ENCODE measurements at regions of chr14 and their contacts with region 1.

Region 1: GRCh38 chr14:35341446-35342159 is 49.4 kb downstream of the PSMA6 start:
- DNase-seq: peak; percentile 97
- H3K4me3 ChIP-seq: peak overlapping the region in 1 of 4 donors; percentile 28
- H3K27ac ChIP-seq: peak overlapping the region; percentile 91 to 95 (median 92)
- H3K4me1 ChIP-seq: peaks cover 50 to 78% (median 62%) of the 10 kb centered on the region in 4 donors
- H3K27me3 ChIP-seq: no peaks in the 10 kb centered on the region
- CTCF ChIP-seq: no peak
- EP300 ChIP-seq: peak; percentile 35
- POLR2A ChIP-seq: peak; percentile 89

Region 2: GRCh38 chr14:35292051-35292769 is 49.4 kb before region 1 on chr14 and contains the start of gene PSMA6:
- in situ Hi-C with region 1: no loop called
- intact Hi-C with region 1: loop called (anchors 5 kb)
- DNase-seq: peak; percentile 100
- H3K4me3 ChIP-seq: peak within 1 kb of the TSS; percentile 58 to 68 (median 64)
- H3K27ac ChIP-seq: peak within 1 kb of the TSS; percentile 89 to 91 (median 90)
- H3K4me1 ChIP-seq: peaks cover 12 to 47% (median 28%) of the 10 kb centered on the region in 4 donors
- H3K27me3 ChIP-seq: no peaks in the 10 kb centered on the region
- CTCF ChIP-seq: no peak
- EP300 ChIP-seq: peak; percentile 3
- POLR2A ChIP-seq: peak; percentile 92
- total RNA-seq, gene PSMA6: 24.5 to 141 (median 81.2) TPM

Region 3: DNA sequence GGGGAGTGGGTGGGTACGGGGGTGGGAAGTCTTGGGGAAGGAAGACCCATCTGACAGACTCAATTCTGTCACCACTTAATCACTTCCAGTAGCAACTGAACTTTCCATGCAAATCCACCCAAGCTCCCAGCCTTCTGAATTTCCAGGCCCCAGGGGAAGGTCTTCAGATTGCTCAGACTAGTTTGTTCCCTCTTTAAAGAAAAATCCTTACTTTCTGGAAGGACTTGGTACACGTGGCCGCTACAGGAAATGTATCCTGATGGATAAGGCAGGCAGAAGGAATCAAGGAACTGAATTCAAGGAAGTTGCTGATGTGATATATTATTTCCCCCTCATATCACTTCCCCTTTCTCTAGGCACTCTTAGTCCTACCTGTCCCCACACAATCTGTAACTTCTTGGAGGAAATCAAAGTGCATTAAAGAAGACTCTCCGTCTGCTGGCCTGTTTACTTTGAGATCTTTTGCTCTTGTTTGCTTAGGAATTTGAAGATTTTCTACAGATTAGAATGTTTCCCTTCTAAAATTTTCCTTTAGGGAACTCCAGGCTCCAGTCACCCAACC is 56.5 kb after region 1 on chr14:
- in situ Hi-C with region 1: loop called in 1 of 4 experiments (anchors 5 kb)
- intact Hi-C with region 1: no loop called
- DNase-seq: no peak
- H3K4me3 ChIP-seq: no peak overlapping the region
- H3K27ac ChIP-seq: peak overlapping the region; percentile 99 to 100 (median 100)
- H3K4me1 ChIP-seq: peaks cover 5 to 62% (median 48%) of the 10 kb centered on the region in 4 donors
- H3K27me3 ChIP-seq: no peaks in the 10 kb centered on the region
- CTCF ChIP-seq: no peak
- EP300 ChIP-seq: no peak
- POLR2A ChIP-seq: no peak